GM23248 (cell line): ENCODE measurements at regions of chr18 and their contacts with region 1.

Region 1: DNA sequence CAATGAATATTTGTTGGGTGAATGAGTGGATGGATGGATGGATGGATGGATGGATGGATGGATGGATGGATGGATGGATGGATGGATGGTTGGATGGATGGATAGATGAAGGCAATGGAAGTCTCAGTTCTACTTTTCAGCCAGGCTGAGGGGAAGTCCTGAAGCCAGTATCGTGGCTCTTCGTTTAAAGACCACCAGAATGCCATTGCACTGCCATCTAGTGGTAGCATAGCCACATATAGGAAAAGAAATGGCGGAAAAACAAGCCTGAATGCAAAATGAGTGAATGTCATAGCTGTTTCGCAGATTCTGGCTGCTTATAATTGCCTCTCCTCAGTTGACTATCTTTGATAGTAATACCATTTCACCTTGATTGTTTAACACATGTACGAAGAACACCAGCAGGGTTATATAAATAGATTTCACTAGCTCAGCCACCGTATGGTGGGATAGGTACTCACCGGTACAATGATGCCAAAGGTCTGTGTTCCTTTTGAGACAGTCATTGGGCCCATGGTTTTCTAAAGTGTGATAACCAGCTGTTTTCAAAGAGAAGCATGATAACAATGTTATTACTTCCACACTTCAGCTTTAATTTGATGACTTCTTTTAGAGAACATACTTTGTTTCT is 62.3 kb upstream of the GREB1L start:
- DNase-seq: peak; percentile 80
- H3K4me3 ChIP-seq: no peak overlapping the region
- H3K27ac ChIP-seq: no peak overlapping the region
- H3K4me1 ChIP-seq: no peaks in the 10 kb centered on the region
- H3K27me3 ChIP-seq: no peaks in the 10 kb centered on the region

Region 2: GRCh38 chr18:20988726-20989125 is 191.0 kb before region 1 on chr18:
- in situ Hi-C with region 1: loop called (anchors 10 kb)
- DNase-seq: no peak
- H3K4me3 ChIP-seq: no peak overlapping the region
- H3K27ac ChIP-seq: no peak overlapping the region
- H3K4me1 ChIP-seq: no peaks in the 10 kb centered on the region
- H3K27me3 ChIP-seq: no peaks in the 10 kb centered on the region

Region 3: DNA sequence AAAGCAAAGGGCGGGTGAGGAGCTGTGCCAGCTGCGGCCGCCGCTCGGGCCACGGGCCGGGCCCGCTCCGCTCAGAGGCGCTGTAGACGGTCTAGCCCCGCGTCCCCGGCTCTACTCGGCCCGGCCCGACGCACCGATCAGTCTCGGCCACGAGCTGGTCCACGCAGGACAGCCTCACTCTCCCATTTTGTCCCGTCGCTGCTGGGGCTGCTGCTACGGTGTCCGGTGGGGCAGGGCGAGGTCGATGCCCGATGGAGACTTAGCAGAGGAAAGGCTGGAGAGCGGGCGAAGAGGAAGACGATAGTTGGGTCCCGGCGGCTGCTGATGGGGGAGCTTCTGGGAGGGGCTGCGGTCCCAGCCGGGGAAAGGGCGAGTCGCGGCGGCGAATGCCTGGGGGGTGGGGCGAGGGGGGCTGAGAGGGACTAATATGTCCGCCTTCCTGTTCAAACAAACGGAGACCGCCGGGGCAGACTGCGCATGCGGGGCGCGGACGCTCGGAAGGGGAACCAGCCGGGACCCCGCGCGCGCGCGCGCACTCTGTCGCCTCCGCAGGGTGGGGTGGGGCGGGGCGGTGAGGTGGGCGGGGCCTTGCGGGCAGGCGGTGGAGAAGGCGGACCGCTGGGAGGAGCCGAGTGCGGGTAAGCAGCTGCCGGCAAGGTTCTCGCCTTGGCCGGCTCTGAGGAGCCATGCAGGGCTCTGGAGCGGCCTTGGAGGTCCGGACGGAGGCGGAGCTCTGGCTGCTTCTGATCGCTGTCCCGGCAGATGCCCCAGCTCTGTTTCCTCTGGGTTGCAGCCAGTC is 68.2 kb before region 1 on chr18 and contains the start of gene ROCK1:
- in situ Hi-C with region 1: loop called (anchors 10 kb)
- DNase-seq: peak; percentile 99
- H3K4me3 ChIP-seq: peak within 1 kb of the TSS; percentile 91
- H3K27ac ChIP-seq: peak within 1 kb of the TSS; percentile 94
- H3K4me1 ChIP-seq: peaks cover 44% of the 10 kb centered on the region
- H3K27me3 ChIP-seq: no peaks in the 10 kb centered on the region
- total RNA-seq, gene ROCK1: 33.6 and 34.4 TPM in 2 replicates

Region 4: GRCh38 chr18:22324191-22325131 is 1144.8 kb after region 1 on chr18:
- in situ Hi-C with region 1: no loop called
- DNase-seq: peak; percentile 47
- H3K4me3 ChIP-seq: 0 out of 2 replicates have a peak overlapping the region, but pooled peaks have one; percentile 31
- H3K27ac ChIP-seq: no peak overlapping the region
- H3K4me1 ChIP-seq: no peaks in the 10 kb centered on the region
- H3K27me3 ChIP-seq: no peaks in the 10 kb centered on the region; the same call in 1 of the 2 replicates